GM12878 (cell line): ENCODE measurements at regions of chr1 and their contacts with region 1.

Region 1: DNA sequence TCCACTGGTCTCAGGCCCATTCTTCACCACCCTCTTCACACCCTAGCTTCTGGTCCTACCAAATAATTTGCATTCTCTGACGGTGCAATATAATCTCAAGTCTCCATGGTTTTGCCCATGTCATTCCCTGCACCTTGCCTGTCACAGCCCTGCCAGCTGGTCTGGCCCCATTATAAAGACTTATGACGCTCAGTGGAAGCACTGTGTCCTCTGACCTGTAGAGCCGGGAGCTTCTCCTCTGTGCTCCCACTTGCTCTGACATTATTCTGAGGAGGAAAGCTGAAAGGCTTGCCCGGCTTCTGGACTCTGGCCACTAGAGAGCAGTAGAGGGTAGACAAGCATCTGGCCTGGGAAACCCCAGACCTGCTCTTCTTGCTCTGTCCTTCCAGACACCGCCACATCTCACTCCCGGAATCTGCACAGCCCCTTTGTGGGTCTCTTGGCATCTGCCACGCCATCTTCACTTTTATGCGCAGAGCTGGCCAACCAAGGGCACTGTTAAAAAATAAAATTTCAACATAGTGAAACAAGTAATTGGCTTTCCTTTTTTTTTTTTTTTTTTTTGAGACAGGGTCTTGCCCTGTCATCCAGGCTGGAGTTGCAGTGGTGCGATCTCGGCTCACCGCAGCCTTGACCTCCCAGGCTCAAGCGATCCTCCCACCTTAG is 44.4 kb downstream of the NENF start:
- DNase-seq: peak; percentile 65
- ATAC-seq: peak; percentile 97
- H3K4me3 ChIP-seq: no peak overlapping the region
- H3K27ac ChIP-seq: no peak overlapping the region; the same call in 1 of the 2 replicates
- H3K4me1 ChIP-seq: peaks cover 6% of the 10 kb centered on the region; the same call in 1 of the 2 replicates
- H3K27me3 ChIP-seq: no peaks in the 10 kb centered on the region
- CTCF ChIP-seq: peak; percentile 94 to 97 (median 96)
- EP300 ChIP-seq: no peak
- POLR2A ChIP-seq: no peak
- RAD21 ChIP-seq: peak; percentile 90

Region 2: DNA sequence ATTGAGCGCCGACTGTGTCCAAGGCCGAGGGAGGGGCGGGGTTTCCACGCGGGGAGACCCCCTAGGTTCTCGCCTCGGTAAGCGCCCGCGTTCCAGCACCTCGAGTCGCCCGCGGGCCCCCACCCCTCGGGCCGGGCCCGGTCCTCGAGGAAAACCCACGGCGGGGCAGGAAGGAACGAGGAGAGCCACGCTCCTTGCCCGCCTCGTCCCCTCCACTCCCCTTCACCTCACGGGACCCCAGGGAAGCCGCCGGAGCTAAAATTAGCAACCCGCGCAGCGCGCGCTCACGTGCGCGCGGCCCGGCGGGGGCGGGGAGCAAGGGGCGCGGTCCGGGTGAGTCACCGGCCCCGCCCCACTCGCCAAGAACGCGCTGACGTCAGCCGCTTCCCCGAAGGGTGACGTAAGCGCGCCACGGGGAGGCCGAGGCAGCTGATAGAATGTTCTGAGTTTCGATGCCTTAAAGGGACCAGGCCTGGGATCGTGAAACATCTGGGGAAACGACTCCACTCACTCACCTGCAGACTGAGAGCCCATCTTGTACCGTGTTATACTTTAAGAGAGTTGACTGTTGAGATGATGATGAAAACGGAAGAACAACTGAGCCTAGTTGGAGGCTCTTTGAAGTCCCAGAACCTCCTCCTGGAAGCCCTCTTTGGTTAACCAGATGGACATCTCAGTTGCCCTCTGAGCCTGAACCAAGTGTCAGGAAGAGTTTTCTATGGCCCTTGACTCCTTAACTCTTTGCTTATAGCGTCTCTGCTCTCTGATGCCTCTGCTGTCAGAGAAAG is 81.7 kb after region 1 on chr1:
- CTCF ChIA-PET with region 1: interaction called, 26 read pairs
- POLR2A ChIA-PET with region 1: interaction called, 4 read pairs
- RAD21 ChIA-PET with region 1: interaction called, 16 read pairs
- SMC1A ChIA-PET with region 1: interaction called, 6 read pairs
- in situ Hi-C with region 1: no loop called
- intact Hi-C with region 1: no loop called
- DNase-seq: peak; percentile 70
- ATAC-seq: peak; percentile 92
- H3K4me3 ChIP-seq: peak overlapping the region; percentile 73
- H3K27ac ChIP-seq: peak overlapping the region; percentile 76
- H3K4me1 ChIP-seq: peaks cover 8% of the 10 kb centered on the region
- H3K27me3 ChIP-seq: no peaks in the 10 kb centered on the region
- CTCF ChIP-seq: no peak
- EP300 ChIP-seq: peak; percentile 46 to 58; a peak in 2 of 4 replicates
- POLR2A ChIP-seq: peak; percentile 71
- RAD21 ChIP-seq: no peak

Region 3: DNA sequence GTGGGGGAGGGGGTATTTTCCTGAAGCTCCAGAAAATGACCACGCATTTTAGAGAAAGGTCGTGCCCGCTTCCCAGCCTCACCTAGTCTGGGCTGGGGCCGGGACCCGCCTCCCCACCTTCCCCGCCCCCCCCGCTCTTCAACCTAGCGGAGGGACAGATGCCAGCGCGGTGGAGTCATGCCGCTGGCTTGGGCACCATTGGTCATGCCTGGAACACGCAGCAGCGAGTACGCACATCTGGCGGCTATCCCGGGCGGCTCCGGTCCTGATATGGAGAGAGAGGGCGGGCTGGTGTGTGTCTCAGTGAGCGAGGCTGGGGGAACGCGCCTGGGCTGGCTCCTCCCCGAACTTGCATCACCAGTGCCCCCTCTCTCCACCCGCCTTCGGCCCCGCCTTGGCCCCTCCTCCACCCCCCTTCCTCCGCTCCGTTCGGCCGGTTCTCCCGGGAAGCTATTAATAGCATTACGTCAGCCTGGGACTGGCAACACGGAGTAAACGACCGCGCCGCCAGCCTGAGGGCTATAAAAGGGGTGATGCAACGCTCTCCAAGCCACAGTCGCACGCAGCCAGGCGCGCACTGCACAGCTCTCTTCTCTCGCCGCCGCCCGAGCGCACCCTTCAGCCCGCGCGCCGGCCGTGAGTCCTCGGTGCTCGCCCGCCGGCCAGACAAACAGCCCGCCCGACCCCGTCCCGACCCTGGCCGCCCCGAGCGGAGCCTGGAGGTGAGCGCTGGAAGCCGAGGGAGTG is 131.2 kb after region 1 on chr1 and contains the start of gene ATF3:
- CTCF ChIA-PET with region 1: interaction called, 38 read pairs
- POLR2A ChIA-PET with region 1: interaction called, 11 read pairs
- RAD21 ChIA-PET with region 1: interaction called, 17 read pairs
- SMC1A ChIA-PET with region 1: interaction called, 24 read pairs
- in situ Hi-C with region 1: no loop called
- intact Hi-C with region 1: loop called (anchors 1 kb)
- DNase-seq: peak; percentile 94
- ATAC-seq: peak; percentile 80
- H3K4me3 ChIP-seq: peak within 1 kb of the TSS; percentile 87
- H3K27ac ChIP-seq: peak within 1 kb of the TSS; percentile 62
- H3K4me1 ChIP-seq: peaks cover 19% of the 10 kb centered on the region
- H3K27me3 ChIP-seq: peaks cover 0 to 6% of the 10 kb centered on the region in 2 experiments; a peak in 1 of 4 replicates
- CTCF ChIP-seq: no peak
- EP300 ChIP-seq: peak in 1 of 2 experiments; percentile 9; a peak in 1 of 4 replicates
- POLR2A ChIP-seq: peak; percentile 99
- RAD21 ChIP-seq: no peak
- polyA plus RNA-seq, gene ATF3: 3.0 to 3.4 TPM

Region 4: GRCh38 chr1:212640223-212640878 is 163.2 kb after region 1 on chr1:
- CTCF ChIA-PET with region 1: interaction called, 12 read pairs
- POLR2A ChIA-PET with region 1: no interaction called
- RAD21 ChIA-PET with region 1: interaction called, 4 read pairs
- SMC1A ChIA-PET with region 1: interaction called, 3 read pairs
- in situ Hi-C with region 1: no loop called
- intact Hi-C with region 1: no loop called
- DNase-seq: no peak
- ATAC-seq: peak; percentile 37
- H3K4me3 ChIP-seq: no peak overlapping the region
- H3K27ac ChIP-seq: no peak overlapping the region
- H3K4me1 ChIP-seq: peaks cover 21% of the 10 kb centered on the region
- H3K27me3 ChIP-seq: no peaks in the 10 kb centered on the region
- CTCF ChIP-seq: no peak
- EP300 ChIP-seq: no peak
- POLR2A ChIP-seq: no peak
- RAD21 ChIP-seq: no peak

Region 5: DNA sequence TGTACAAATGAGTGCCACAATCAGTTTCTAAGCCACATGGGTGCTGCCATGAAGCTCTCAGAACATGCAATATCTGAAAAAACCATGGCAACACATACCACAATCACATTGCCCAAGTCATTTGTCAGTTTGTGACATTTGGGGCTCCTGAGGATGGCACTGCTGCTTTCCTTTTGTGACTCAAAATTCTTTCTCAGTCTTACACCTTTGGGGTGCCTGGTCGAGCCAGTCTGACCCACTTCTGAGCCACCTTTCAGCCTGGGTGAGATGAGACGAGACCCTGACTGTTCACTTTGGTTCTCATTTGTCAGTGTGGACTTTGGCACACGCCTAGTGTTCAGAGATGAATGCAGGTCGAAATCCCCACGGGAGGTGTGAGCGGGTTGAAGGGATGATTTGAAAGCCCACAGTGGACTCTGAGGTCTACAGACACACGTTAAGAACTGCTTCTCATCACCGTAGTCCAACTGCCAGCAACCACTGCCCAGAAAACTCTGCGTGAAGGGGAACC is 214.5 kb after region 1 on chr1:
- CTCF ChIA-PET with region 1: interaction called, 12 read pairs
- POLR2A ChIA-PET with region 1: interaction called, 4 read pairs
- RAD21 ChIA-PET with region 1: interaction called, 27 read pairs
- SMC1A ChIA-PET with region 1: interaction called, 9 read pairs
- in situ Hi-C with region 1: no loop called
- intact Hi-C with region 1: no loop called
- DNase-seq: peak; percentile 60
- ATAC-seq: peak; percentile 93
- H3K4me3 ChIP-seq: no peak overlapping the region; the same call in 1 of the 2 replicates
- H3K27ac ChIP-seq: no peak overlapping the region
- H3K4me1 ChIP-seq: peaks cover 7% of the 10 kb centered on the region
- H3K27me3 ChIP-seq: no peaks in the 10 kb centered on the region
- CTCF ChIP-seq: no peak
- EP300 ChIP-seq: no peak
- POLR2A ChIP-seq: no peak
- RAD21 ChIP-seq: no peak

Region 6: DNA sequence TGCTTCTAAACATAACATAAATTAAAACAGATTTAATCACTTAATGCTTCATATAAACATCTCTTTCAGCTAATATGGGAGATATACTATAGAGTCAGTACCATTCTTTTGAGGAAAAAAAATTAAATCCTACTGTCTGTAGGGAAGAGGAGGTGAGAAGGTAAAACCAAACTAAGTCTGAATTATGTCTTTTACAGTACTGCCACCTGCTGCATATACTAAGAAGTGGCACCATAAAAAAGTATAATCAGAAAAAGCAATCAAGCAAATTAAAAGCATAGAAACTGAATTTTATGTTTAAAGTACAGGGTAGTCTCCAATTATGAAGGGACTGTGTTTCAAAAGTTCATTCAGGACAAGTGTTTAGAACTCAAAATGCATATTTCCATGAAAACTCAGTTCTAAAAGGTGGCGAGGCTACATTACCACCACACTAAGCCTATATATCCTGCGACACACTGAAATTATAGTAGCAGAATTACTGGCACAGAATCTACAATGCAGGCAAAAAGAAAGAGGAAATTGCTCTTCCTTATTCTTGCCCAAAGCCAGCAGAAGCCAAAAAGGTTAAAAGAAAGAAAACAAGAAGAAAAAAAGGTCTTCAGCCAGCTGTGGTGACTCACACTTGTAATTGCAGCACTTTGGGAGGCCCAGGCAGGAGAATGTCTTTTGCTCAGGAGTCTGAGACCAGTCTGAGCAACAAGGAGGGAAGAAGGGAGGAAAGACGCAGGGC is 305.4 kb after region 1 on chr1:
- CTCF ChIA-PET with region 1: interaction called, 84 read pairs
- POLR2A ChIA-PET with region 1: interaction called, 5 read pairs
- RAD21 ChIA-PET with region 1: interaction called, 23 read pairs
- SMC1A ChIA-PET with region 1: interaction called, 63 read pairs
- in situ Hi-C with region 1: no loop called
- intact Hi-C with region 1: loop called (anchors 1 kb)
- DNase-seq: no peak
- ATAC-seq: peak; percentile 68
- H3K4me3 ChIP-seq: no peak overlapping the region
- H3K27ac ChIP-seq: no peak overlapping the region
- H3K4me1 ChIP-seq: peaks cover 10% of the 10 kb centered on the region; the same call in 1 of the 2 replicates
- H3K27me3 ChIP-seq: no peaks in the 10 kb centered on the region
- CTCF ChIP-seq: peak; percentile 53 to 71 (median 64); a peak in 5 of 6 replicates
- EP300 ChIP-seq: no peak
- POLR2A ChIP-seq: no peak
- RAD21 ChIP-seq: peak; percentile 81